HEK293T (cell line): ENCODE measurements at regions of chr19 and their contacts with region 1.

Region 1: GRCh38 chr19:7488736-7489353 is at the start of gene PEX11G:
- DNase-seq: peak; percentile 93

Region 2: GRCh38 chr19:7500811-7501450 is 12.1 kb after region 1 on chr19:
- CTCF ChIA-PET with region 1: interaction called, 5 read pairs
- POLR2A ChIA-PET with region 1: interaction called, 12 read pairs
- DNase-seq: peak; percentile 82

Region 3: DNA sequence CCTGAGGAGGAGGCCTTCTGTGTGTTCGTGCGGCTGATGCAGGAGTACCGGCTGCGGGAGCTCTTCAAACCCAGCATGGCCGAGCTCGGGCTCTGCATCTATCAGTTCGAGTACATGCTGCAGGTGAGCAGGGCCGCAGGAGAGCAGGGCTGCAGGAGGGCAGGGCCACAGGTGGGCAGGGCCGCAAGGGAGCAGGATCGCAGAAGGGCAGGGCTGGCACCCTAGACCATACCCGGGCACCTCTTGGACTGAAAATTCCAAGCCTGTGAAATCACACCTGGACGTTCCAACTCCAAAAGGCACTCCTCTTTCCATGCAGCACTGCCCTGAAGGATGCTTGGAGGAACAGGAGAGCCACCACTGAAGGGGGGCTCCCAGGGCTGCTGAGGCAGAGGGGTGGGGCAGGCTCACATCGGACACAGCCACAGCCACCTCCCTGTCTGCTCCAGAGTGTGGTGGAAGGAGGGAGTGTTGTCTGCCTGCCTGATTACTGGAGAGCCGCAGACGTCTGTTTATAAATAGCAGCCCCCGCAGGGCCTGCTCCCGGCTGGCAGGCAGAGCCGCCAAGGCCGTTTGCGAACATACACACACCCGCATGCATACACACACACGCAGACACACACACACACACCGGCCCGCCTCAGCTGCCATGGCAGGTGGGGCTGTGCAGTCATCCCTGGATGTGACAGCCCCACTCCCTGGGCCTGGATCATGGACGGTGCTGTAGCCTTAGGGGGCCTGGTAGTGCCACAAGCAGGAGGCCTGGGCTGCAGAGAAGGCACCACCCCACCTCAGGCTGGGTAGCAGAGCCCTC is 361.4 kb after region 1 on chr19:
- CTCF ChIA-PET with region 1: no interaction called
- POLR2A ChIA-PET with region 1: no interaction called
- DNase-seq: no peak